Activated CD4-positive, alpha-beta T cell treated with anti-CD3 and anti-CD28 coated beads, Interleukin-2, amount 10 ng/mL, durations not matched to agents 7 days and 5 days (primary cell): ENCODE measurements at regions of chr16 and their contacts with region 1.

Region 1: DNA sequence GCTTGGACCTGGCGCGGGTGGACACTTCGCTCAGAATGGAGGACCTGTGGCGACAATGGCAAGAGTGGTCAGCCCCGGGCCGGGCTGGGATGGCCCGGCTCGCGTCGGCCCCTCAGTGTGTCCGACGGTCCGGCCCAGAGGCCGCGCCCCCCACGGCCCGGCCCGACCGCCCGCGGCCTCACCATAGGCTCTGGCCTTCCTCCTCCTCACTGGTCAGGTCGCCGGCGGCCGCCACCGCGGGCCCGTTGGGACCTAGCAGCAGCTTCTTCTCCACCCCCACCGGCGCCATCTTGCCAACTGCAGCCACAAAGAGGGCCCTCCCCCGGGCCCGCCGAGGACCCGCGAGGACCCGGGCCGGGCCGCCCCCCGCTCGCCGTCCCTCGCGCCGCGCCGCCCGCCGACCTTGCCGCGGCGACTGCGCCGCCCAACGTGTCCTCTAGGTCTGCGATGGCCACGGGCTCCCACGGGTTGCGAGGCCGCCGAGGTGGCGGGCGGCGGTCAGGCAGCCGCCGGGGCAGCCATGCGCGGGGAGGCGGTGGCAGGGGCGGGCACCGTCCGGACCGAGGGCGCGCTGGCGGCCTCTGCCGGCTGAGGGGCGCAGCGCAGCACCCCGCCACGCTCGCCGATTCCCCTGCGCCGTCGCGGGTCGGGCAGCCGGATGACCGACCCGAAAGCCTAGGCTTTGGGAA is at the start of gene DYNC1LI2:
- DNase-seq: peak; percentile 84
- H3K4me3 Mint-ChIP-seq: peak within 1 kb of the TSS; percentile 80
- H3K27ac Mint-ChIP-seq: peak within 1 kb of the TSS; percentile 93
- H3K4me1 Mint-ChIP-seq: peaks cover 51% of the 10 kb centered on the region
- H3K27me3 Mint-ChIP-seq: peaks cover 27% of the 10 kb centered on the region
- total RNA-seq, gene DYNC1LI2: 53.9 to 65.9 TPM

Region 2: DNA sequence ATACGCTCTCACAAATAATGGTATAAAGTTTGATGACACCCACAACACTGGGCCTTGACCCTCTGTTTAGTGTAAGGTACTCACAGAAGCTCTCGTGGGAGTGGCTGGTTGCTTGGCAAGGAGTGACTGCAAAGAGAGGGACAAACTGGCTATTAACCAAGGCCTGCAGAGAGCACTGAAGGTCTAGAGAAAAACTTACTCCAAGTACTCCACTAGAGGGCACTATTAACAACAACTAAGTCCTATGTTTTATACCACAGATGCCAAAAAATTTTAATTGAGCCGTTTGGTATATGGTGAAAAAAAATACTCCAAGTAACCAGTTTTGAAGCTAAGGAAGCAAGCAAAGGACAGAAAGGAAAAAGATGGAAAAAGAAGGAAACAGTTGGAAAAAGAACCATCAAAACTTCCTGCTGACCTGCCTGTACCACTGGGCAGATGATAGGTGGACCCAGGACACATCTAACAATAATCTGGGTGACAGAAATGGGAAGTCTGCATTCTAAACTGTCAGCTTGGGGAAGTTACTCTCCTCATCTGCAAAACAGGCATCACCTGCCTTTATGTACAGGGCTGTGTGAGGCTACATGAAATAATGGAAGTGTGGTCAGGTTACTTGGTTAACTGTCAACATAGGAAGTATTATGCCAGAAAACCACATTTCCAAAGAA is 23.2 kb before region 1 on chr16:
- CTCF ChIA-PET with region 1: interaction called, 13 read pairs
- POLR2A ChIA-PET with region 1: no interaction called
- DNase-seq: peak; percentile 26
- H3K4me3 Mint-ChIP-seq: no peak overlapping the region
- H3K27ac Mint-ChIP-seq: peak overlapping the region; percentile 38
- H3K4me1 Mint-ChIP-seq: peaks cover 8% of the 10 kb centered on the region
- H3K27me3 Mint-ChIP-seq: no peaks in the 10 kb centered on the region

Region 3: GRCh38 chr16:66740010-66740409 is 11.4 kb before region 1 on chr16:
- CTCF ChIA-PET with region 1: interaction called, 20 read pairs
- POLR2A ChIA-PET with region 1: no interaction called
- DNase-seq: peak; percentile 38
- H3K4me3 Mint-ChIP-seq: no peak overlapping the region
- H3K27ac Mint-ChIP-seq: peak overlapping the region; percentile 52
- H3K4me1 Mint-ChIP-seq: peaks cover 30% of the 10 kb centered on the region
- H3K27me3 Mint-ChIP-seq: no peaks in the 10 kb centered on the region